Ascending aorta (tissue), 2 donors: ENCODE measurements at regions of chr22 and their contacts with region 1.

Region 1: DNA sequence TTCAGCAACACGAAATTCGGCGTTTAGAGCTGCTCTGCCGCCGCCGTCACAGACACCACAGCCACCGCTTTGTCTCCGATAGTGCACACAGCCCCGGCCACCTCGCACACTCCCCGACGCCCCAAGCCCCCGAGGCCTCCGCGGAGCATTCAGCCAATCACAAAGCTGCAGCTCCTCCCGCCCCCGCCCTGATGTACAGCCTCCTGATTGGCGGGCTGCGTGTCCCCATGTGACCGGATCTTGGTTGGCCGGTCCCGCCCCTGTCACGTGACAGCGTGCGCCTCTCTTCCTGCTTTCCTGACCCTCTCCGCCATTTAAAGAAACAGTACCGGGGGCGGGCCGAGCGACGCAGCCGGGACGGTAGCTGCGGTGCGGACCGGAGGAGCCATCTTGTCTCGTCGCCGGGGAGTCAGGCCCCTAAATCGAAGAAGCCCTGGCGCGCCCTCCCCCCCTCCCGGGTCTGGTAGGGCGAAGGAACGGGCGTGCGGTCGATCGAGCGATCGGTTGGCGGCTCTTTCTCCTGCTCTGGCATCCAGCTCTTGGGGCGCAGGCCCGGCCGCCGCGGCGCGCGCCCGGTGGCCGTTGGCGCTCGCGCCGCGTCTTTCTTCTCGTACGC is at the start of gene TUG1:
- DNase-seq: peak; percentile 97 to 99
- H3K4me3 ChIP-seq: peak within 1 kb of the TSS; percentile 84 to 96
- H3K27ac ChIP-seq: peak within 1 kb of the TSS; percentile 96
- H3K4me1 ChIP-seq: peaks cover 4 to 16% of the 10 kb centered on the region in 2 donors
- H3K27me3 ChIP-seq: no peaks in the 10 kb centered on the region
- CTCF ChIP-seq: no peak
- total RNA-seq, gene TUG1: 46.2 TPM

Region 2: DNA sequence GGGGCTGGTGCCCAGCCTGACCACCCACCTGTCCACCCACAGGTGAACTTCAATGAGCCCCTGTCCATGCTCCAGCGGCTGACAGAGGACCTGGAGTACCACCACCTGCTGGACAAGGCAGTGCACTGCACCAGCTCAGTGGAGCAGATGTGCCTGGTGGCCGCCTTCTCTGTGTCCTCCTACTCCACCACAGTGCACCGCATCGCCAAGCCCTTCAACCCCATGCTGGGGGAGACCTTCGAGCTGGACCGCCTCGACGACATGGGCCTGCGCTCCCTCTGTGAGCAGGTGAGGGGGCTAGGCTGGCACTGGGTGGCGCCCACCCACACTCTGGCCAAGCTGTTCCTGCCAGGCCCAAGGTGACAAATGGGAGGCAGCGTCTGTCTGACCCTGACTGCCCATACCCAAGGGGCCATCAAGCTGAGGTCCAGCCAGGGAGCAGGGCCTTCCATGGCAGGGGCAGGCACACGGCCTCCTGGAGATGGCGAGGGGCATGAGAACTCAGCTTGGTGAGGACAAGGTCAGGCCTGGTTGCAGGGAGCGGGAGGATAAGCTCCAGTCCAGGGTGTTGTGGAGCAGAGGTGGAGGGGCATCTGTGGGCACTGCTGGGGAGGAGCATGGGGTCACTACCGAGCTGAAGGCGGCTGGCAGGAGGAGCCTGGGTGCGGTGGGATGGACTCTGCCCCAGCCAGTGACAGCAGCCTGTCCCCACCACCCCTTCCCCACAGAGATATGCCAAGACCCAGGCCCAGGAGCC is 78.2 kb before region 1 on chr22:
- intact Hi-C with region 1: no loop called
- DNase-seq: peak in 1 of 2 donors; percentile 61
- H3K4me3 ChIP-seq: no peak overlapping the region
- H3K27ac ChIP-seq: no peak overlapping the region
- H3K4me1 ChIP-seq: no peaks in the 10 kb centered on the region
- H3K27me3 ChIP-seq: no peaks in the 10 kb centered on the region
- CTCF ChIP-seq: peak; percentile 47 to 64 (median 54)

Region 3: DNA sequence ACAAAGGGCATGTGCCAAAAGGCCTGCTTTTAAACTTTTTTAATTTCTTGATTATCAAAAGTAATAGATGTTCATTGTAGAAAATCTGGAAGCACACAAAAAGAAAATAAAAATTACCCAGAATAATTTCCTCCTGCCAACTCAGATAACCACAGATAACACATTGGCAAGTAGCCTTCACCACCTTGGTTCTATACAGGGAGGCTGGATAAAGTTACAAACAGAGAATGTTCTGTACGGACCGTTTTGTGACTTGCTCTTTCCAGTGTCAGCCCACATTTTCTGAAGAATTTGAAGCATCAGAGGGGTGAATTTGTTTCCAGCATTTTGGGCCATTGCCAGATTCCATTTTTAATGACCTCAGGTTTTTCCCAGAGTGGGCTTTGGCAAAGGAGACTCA is 23.5 kb after region 1 on chr22:
- intact Hi-C with region 1: loop called (anchors 2 kb)
- DNase-seq: no peak
- H3K4me3 ChIP-seq: no peak overlapping the region
- H3K27ac ChIP-seq: peak overlapping the region; percentile 75 to 83
- H3K4me1 ChIP-seq: peaks cover 0 to 21% of the 10 kb centered on the region in 2 donors
- H3K27me3 ChIP-seq: no peaks in the 10 kb centered on the region
- CTCF ChIP-seq: no peak

Region 4: GRCh38 chr22:31055635-31056159 is 86.7 kb after region 1 on chr22:
- intact Hi-C with region 1: loop called (anchors 1 kb)
- DNase-seq: peak; percentile 76 to 97
- H3K4me3 ChIP-seq: no peak overlapping the region
- H3K27ac ChIP-seq: peak overlapping the region; percentile 89 to 91
- H3K4me1 ChIP-seq: peaks cover 6 to 32% of the 10 kb centered on the region in 2 donors
- H3K27me3 ChIP-seq: no peaks in the 10 kb centered on the region
- CTCF ChIP-seq: no peak